ENCODE measurements at regions of chr6 and their contacts with region 1.

Region 1: GRCh38 chr6:41779793-41780545 is at the start of gene FRS3:
- DNase-seq: peak; percentile 96 to 99 (median 97)
- H3K4me3 ChIP-seq: peak within 1 kb of the TSS; percentile 45 to 76
- H3K4me3 Mint-ChIP-seq: peak within 1 kb of the TSS; percentile 87 to 94 (median 88)
- H3K27ac ChIP-seq: peak within 1 kb of the TSS; percentile 44
- H3K27ac Mint-ChIP-seq: peak within 1 kb of the TSS in 6 of 7 donors; percentile 83 to 93 (median 88)
- H3K4me1 ChIP-seq: peaks cover 15% of the 10 kb centered on the region
- H3K4me1 Mint-ChIP-seq: peaks cover 9 to 32% (median 13%) of the 10 kb centered on the region in 4 donors
- H3K27me3 ChIP-seq: no peaks in the 10 kb centered on the region
- H3K27me3 Mint-ChIP-seq: peaks cover 2 to 3% of the 10 kb centered on the region in 2 donors
- total RNA-seq, gene FRS3: 8.9 to 10.0 TPM

Region 2: DNA sequence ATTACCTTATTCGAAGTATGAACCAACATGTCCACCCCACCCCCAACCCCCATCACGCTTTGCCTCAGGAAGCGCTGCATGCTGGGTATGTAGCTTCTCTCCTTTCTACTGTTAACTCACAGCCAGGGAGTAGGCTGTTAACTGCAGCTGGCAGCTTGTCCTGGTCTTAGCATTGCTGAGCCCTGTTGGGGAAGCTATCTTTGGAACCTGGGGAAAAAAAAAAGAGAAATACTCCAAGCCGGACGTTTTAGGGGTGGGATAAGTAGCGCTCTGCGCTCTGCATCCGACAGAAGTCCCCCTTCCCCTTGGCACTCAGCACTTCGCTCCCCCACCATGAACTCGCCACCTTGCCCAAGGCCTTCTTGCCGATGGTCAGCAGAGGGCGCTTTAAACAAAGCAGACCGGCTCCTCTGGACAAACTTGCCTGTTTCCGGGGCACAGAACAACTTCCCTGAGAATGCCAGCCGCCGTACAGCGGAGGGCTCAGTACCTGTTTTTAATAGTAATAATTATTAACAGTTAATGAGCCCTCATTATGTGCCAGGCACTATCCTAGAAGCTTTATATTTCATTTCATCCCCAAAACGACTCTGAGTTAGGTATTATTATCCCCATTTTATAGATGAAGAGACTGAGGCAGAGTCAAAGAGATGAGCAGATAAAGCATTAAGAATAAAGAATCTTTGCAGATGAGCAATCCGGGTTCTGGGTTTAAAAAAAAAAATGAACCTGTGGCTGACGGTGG is 176.9 kb before region 1 on chr6:
- CTCF ChIA-PET with region 1: no interaction called
- POLR2A ChIA-PET with region 1: no interaction called
- intact Hi-C with region 1: loop called (anchors 2 kb)
- DNase-seq: peak; percentile 67 to 71 (median 70)
- H3K4me3 ChIP-seq: no peak overlapping the region
- H3K4me3 Mint-ChIP-seq: peak overlapping the region in 3 of 8 donors; percentile 3 to 26 (median 18)
- H3K27ac ChIP-seq: no peak overlapping the region
- H3K27ac Mint-ChIP-seq: peak overlapping the region in 2 of 7 donors; percentile 38 to 41
- H3K4me1 ChIP-seq: peaks cover 11% of the 10 kb centered on the region
- H3K4me1 Mint-ChIP-seq: peaks cover 0 to 7% (median 5%) of the 10 kb centered on the region in 4 donors
- H3K27me3 ChIP-seq: peaks cover 3% of the 10 kb centered on the region
- H3K27me3 Mint-ChIP-seq: peaks cover 4 to 7% of the 10 kb centered on the region in 2 donors

Region 3: DNA sequence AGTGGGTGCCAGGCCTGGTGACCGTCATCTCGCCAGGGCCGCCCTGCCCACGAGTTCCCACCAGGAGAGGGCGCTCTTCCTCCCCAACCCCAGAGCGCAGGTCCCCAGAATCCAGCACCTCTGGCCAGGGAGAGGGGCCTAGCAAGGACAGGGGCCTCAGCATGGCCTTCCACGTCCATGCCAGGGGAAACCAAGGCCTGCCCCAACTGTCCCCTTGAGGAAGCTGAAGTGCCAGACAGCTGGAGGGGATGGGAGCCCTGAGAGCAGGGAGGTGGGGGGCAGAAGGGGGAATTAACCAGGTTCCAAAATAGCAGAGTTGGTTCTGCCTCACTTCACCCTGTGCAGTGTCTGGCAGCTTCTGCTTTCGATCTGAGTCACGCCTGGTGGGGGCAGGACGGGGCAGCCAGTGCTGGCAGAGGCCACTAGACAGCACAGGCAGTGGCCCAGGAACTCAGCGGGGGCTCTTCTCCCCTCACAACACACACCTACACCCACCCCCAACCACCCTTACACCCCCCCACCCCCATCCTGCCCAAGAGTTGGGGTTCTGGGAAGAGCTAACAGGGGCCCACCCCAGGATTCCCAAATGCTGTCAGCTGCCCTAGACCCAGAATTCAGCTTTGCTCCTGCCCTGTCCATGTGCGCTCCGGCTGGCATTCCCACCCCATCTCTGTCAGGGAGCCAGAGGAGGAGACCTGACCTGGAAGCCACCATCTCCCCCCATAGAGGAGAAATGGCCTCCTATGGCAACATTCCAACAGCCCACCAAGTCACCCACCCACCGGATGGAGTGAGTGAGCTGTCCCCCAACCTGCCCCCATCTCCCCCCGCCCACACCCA is 73.8 kb before region 1 on chr6:
- CTCF ChIA-PET with region 1: no interaction called
- POLR2A ChIA-PET with region 1: no interaction called
- intact Hi-C with region 1: loop called (anchors 2 kb)
- DNase-seq: peak; percentile 21 to 64 (median 31)
- H3K4me3 ChIP-seq: no peak overlapping the region
- H3K4me3 Mint-ChIP-seq: peak overlapping the region in 3 of 8 donors; percentile 63 to 86 (median 70)
- H3K27ac ChIP-seq: no peak overlapping the region
- H3K27ac Mint-ChIP-seq: peak overlapping the region in 6 of 7 donors; percentile 8 to 81 (median 60)
- H3K4me1 ChIP-seq: peaks cover 35% of the 10 kb centered on the region
- H3K4me1 Mint-ChIP-seq: peaks cover 28 to 61% (median 39%) of the 10 kb centered on the region in 4 donors
- H3K27me3 ChIP-seq: no peaks in the 10 kb centered on the region
- H3K27me3 Mint-ChIP-seq: no peaks in the 10 kb centered on the region

Region 4: DNA sequence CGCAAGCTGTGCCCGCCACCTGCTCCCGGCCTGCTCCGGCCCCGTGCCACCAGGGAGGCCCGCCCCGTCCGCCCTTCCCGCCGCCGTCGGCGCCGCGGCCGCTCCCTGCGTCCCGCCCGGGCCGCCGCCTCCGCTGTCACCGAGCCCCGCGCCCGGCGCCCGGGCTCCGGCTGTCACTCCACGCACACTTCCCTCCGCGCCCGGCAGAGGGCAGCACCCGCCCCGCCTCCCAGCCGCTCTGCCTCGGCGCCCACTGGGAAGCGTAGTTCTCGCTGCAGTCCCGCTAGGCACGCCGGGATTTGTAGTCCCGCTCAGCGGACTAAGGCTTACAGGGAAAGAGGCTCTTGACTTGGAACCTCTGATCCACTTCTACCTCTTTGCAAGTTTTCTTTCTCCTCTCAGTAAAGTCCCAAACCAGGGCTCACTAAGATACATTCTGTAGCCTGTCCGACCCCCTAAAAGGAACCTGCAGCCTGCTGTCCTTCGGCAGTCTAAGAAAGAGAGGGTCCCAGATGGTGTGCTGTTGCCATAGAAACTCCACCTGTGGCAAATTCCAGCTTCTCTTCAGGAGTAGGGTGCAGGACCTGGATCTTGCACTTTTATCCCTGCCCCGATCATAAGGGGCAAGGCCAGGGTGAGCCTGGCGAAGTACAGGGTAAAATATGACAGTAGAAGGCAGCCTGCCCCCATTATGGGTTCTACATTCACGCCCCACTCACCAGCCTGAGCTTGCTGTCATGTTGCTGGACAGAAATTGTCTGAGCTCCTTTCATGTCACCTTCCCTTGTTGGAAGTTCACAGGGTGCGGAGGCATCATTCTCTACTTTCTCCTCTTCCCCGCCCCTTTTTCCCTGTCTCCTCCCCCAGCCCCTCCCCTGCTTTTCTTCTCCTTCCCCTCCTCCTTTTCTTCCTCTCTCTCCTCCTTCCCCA is 44.3 kb before region 1 on chr6 and contains the start of gene TFEB:
- CTCF ChIA-PET with region 1: interaction called, 22 read pairs
- POLR2A ChIA-PET with region 1: interaction called, 3 read pairs
- intact Hi-C with region 1: loop called (anchors 1 kb)
- DNase-seq: peak; percentile 92 to 95 (median 92)
- H3K4me3 ChIP-seq: peak within 1 kb of the TSS in 1 of 2 donors; percentile 64
- H3K4me3 Mint-ChIP-seq: peak within 1 kb of the TSS; percentile 77 to 91 (median 82)
- H3K27ac ChIP-seq: peak within 1 kb of the TSS; percentile 75
- H3K27ac Mint-ChIP-seq: peak within 1 kb of the TSS; percentile 42 to 93 (median 76)
- H3K4me1 ChIP-seq: peaks cover 38% of the 10 kb centered on the region
- H3K4me1 Mint-ChIP-seq: peaks cover 16 to 35% (median 26%) of the 10 kb centered on the region in 4 donors
- H3K27me3 ChIP-seq: no peaks in the 10 kb centered on the region
- H3K27me3 Mint-ChIP-seq: peaks cover 0 to 1% of the 10 kb centered on the region in 2 donors
- total RNA-seq, gene TFEB: 12.2 to 15.7 TPM

Region 5: GRCh38 chr6:41801380-41801779 is 21.4 kb after region 1 on chr6:
- CTCF ChIA-PET with region 1: no interaction called
- POLR2A ChIA-PET with region 1: no interaction called
- intact Hi-C with region 1: no loop called
- DNase-seq: no peak
- H3K4me3 ChIP-seq: no peak overlapping the region
- H3K4me3 Mint-ChIP-seq: no peak overlapping the region
- H3K27ac ChIP-seq: no peak overlapping the region
- H3K27ac Mint-ChIP-seq: no peak overlapping the region
- H3K4me1 ChIP-seq: no peaks in the 10 kb centered on the region
- H3K4me1 Mint-ChIP-seq: peaks cover 0 to 1% (median 0%) of the 10 kb centered on the region in 4 donors
- H3K27me3 ChIP-seq: no peaks in the 10 kb centered on the region
- H3K27me3 Mint-ChIP-seq: no peaks in the 10 kb centered on the region

Region 6: GRCh38 chr6:41846666-41847237 is 66.8 kb after region 1 on chr6:
- CTCF ChIA-PET with region 1: no interaction called
- POLR2A ChIA-PET with region 1: no interaction called
- intact Hi-C with region 1: loop called (anchors 1 kb)
- DNase-seq: peak; percentile 41 to 57 (median 51)
- H3K4me3 ChIP-seq: no peak overlapping the region
- H3K4me3 Mint-ChIP-seq: no peak overlapping the region
- H3K27ac ChIP-seq: no peak overlapping the region
- H3K27ac Mint-ChIP-seq: peak overlapping the region in 1 of 7 donors; percentile 53
- H3K4me1 ChIP-seq: no peaks in the 10 kb centered on the region
- H3K4me1 Mint-ChIP-seq: peaks cover 5 to 8% (median 6%) of the 10 kb centered on the region in 4 donors
- H3K27me3 ChIP-seq: no peaks in the 10 kb centered on the region
- H3K27me3 Mint-ChIP-seq: no peaks in the 10 kb centered on the region

Region 7: DNA sequence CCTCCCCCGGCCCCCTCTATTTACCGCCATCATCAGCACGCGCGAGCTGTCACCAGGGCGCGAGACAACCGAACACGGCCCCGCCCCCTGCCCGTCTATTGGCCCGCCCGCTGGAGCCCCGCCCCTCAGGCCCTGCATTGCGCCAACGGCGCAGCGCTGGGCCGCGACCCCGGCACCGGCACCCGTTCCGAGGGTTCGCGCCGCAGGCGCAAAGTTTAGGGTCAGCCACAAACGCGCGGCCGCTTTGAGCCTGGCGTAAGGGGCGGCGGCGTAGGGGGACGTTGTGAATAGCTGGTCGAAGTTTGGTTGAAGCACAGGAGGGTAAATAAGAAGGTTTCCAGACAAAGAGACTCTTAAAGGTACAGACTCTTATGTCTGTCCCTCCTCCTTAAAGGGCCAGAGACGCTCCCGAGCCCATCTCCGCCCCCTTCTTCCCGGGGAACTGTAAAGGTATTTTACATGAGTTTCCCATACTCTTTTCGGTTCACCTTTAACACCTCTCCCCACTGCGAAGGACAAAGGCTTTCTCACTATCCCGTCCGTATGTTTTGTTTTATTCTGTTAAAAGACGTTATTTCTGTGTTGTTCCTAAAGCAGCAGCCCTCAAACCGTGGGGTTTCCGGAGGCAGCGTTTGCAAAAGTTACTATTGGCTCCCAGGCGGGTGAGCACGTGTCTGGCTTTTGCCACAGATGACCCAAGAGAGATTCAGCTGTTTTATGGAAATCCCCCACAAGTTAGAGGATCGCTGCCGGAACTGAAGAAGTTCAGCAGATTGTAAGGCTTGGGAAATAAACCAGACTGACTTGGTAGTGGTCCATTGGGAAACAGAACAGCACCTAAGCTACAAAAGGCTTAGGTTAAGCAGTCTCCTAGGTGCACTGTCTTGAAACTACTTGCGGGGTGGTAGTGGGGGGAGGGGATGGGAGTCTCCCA is 115.6 kb after region 1 on chr6 and contains the start of gene USP49:
- CTCF ChIA-PET with region 1: no interaction called
- POLR2A ChIA-PET with region 1: no interaction called
- intact Hi-C with region 1: loop called (anchors 1 kb)
- DNase-seq: peak; percentile 86 to 92 (median 88)
- H3K4me3 ChIP-seq: peak within 1 kb of the TSS; percentile 74 to 91
- H3K4me3 Mint-ChIP-seq: peak within 1 kb of the TSS in 2 of 8 donors; percentile 90 to 98
- H3K27ac ChIP-seq: peak within 1 kb of the TSS; percentile 77
- H3K27ac Mint-ChIP-seq: peak within 1 kb of the TSS in 6 of 7 donors; percentile 79 to 94 (median 90)
- H3K4me1 ChIP-seq: peaks cover 23% of the 10 kb centered on the region
- H3K4me1 Mint-ChIP-seq: peaks cover 9 to 12% (median 10%) of the 10 kb centered on the region in 4 donors
- H3K27me3 ChIP-seq: no peaks in the 10 kb centered on the region
- H3K27me3 Mint-ChIP-seq: no peaks in the 10 kb centered on the region
- total RNA-seq, gene USP49: 1.8 to 2.4 TPM

Region 8: GRCh38 chr6:42166444-42167141 is 386.6 kb after region 1 on chr6:
- CTCF ChIA-PET with region 1: interaction called, 4 read pairs
- POLR2A ChIA-PET with region 1: no interaction called
- intact Hi-C with region 1: loop called (anchors 1 kb)
- DNase-seq: peak; percentile 61 to 73 (median 67)
- H3K4me3 ChIP-seq: no peak overlapping the region
- H3K4me3 Mint-ChIP-seq: no peak overlapping the region
- H3K27ac ChIP-seq: no peak overlapping the region
- H3K27ac Mint-ChIP-seq: peak overlapping the region in 2 of 7 donors; percentile 66 to 87
- H3K4me1 ChIP-seq: no peaks in the 10 kb centered on the region
- H3K4me1 Mint-ChIP-seq: peaks cover 0 to 8% (median 2%) of the 10 kb centered on the region in 4 donors
- H3K27me3 ChIP-seq: no peaks in the 10 kb centered on the region
- H3K27me3 Mint-ChIP-seq: peaks cover 3 to 5% of the 10 kb centered on the region in 2 donors

Measured in CD4-positive, alpha-beta memory T cell (primary cell).